Thyroid gland (tissue), 4 donors: ENCODE measurements at regions of chr22 and their contacts with region 1.

Region 1: DNA sequence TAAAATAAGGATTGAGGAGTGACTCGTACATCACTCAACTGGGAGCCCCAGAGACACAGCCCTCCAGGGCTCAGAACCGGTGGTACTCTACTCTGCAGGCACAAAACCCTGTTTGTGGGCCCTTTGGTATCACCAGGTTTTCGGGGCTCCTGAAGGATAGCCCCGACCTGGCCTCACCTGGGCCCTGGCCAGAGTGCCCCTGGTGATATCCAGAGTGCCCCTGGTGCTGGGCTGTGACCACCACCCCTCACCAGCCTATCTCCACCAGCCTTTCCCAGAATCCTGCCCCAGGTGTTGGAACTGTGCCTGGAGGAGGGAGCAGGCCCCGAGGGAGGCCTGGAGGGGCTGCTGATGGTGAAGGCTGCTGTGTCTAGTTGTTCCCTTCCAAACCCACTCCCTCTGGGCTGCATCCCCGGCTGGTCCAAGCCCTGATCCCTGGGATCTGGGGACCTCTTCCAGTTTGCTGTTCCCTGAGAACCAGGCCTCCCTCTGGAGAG is 2.2 kb upstream of the GGT5 start:
- DNase-seq: no peak
- H3K4me3 ChIP-seq: no peak overlapping the region
- H3K27ac ChIP-seq: peak overlapping the region; percentile 93 to 100 (median 95)
- H3K4me1 ChIP-seq: peaks cover 34 to 51% of the 10 kb centered on the region in 2 donors
- H3K27me3 ChIP-seq: no peaks in the 10 kb centered on the region
- CTCF ChIP-seq: no peak
- POLR2A ChIP-seq: no peak

Region 2: DNA sequence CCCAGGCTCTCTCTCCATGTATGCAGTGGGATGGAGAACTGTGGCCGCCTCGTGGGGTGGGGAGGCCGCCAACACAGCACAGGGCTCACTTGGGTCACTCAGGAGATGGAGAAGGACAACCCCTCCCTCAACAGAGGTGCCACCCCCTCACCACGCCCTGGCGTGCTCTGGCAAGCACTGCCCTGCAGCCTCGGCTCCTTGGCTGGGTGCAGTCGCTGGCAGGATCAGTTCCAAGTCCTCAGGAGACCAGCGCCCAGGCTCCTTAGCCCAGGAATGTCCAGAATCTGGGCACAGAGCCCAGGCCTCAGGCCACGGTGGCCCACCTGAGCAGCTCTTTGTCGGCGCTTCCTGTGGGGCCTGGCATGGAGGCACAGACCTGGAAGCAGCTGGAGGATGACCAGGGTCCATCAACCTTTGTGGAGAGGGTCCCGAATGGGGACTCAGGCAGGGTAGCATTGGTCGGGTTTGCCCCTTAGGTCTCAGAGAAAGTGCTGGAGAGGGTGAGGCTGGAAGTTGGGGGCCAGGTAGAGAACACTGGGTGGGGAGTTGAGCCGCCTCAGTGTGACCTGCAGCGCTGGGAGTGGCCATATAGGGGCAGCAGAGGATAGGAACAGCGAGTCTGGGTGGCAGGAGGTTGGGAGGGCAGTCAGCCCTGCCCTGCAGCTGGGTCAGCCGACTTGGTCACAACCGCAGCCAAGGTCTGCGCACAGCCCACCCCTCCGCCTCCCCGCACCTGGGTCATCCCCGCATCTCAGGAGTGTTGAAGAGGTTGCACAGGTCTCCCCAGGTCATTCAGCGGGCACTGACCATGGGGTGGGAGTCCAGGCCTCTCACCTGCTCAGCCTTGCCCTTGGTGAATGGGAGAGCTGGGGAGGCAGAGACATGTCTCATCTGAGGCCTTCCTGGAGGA is 57.6 kb before region 1 on chr22:
- intact Hi-C with region 1: loop called (anchors 2 kb)
- DNase-seq: peak; percentile 98 to 99
- H3K4me3 ChIP-seq: no peak overlapping the region
- H3K27ac ChIP-seq: peak overlapping the region; percentile 87 to 93 (median 91)
- H3K4me1 ChIP-seq: peaks cover 18 to 32% of the 10 kb centered on the region in 2 donors
- H3K27me3 ChIP-seq: no peaks in the 10 kb centered on the region
- CTCF ChIP-seq: peak; percentile 62 to 100 (median 94)
- POLR2A ChIP-seq: no peak